ENCODE measurements at regions of chr1 and their contacts with region 1.

Region 1: GRCh38 chr1:1122078-1122811 is 6.4 kb upstream of the C1orf159 start:
- DNase-seq: peak; percentile 92
- ATAC-seq: peak; percentile 93

Region 2: GRCh38 chr1:1246577-1247340 is 124.5 kb after region 1 on chr1 and contains the start of gene C1QTNF12:
- intact Hi-C with region 1: loop called (anchors 1 kb)
- DNase-seq: no peak
- ATAC-seq: no peak
- total RNA-seq, gene C1QTNF12: 3.5 TPM

Region 3: GRCh38 chr1:1291548-1292441 is 169.6 kb after region 1 on chr1:
- intact Hi-C with region 1: loop called (anchors 5 kb)
- DNase-seq: peak; percentile 82
- ATAC-seq: peak; percentile 72

Region 4: GRCh38 chr1:1489861-1490260 is 367.6 kb after region 1 on chr1:
- intact Hi-C with region 1: no loop called
- DNase-seq: no peak
- ATAC-seq: no peak